ENCODE measurements at regions of chr22 and their contacts with region 1.

Region 1: DNA sequence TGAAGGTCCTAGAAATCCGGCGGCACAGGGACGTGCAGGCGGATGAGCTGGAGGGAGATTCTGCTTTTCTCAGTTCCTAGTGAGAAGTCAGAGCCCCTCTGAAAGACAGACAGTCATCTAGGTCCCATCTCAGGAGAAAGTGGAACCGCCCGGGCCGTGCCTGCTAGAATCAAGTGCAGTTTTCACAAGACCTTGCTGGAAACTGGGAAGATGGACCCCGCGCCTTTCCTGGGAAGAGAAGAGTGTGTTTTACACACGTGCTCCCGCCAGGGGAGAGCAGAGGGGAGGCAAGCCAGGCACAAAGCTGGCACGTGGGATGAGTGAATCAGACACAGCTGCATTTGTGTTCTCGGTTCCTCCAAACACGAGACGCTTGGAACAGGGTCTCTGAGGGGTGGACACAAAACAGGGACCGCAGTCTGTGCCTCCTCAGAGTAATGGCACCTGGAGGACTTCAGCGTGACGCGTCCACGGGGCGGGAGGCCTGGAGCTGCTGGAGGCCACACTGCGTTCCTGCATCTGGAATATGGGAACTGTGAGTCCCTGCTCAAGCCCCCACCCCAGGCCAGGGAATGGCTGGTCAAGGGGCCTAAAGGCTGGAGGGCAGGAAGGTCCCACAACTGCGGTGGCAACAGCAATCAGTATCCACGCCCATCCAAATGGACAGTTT is 218.3 kb downstream of the BRD1 start:
- DNase-seq: no peak
- H3K4me3 ChIP-seq: no peak overlapping the region
- H3K27ac ChIP-seq: no peak overlapping the region
- H3K4me1 ChIP-seq: no peaks in the 10 kb centered on the region
- H3K27me3 ChIP-seq: no peaks in the 10 kb centered on the region
- CTCF ChIP-seq: no peak
- POLR2A ChIP-seq: no peak

Region 2: GRCh38 chr22:49554741-49555140 is 54.6 kb before region 1 on chr22:
- intact Hi-C with region 1: loop called (anchors 5 kb)
- DNase-seq: no peak
- H3K4me3 ChIP-seq: no peak overlapping the region
- H3K27ac ChIP-seq: no peak overlapping the region
- H3K4me1 ChIP-seq: no peaks in the 10 kb centered on the region
- H3K27me3 ChIP-seq: no peaks in the 10 kb centered on the region
- CTCF ChIP-seq: no peak
- POLR2A ChIP-seq: no peak